Dorsolateral prefrontal cortex (tissue), 120 donors: ENCODE measurements at regions of chr15 and their contacts with region 1.

Region 1: GRCh38 chr15:55196458-55197361 is at the start of gene RSL24D1:
- DNase-seq: peak; percentile 89 to 99 (median 97)
- H3K4me3 ChIP-seq: peak within 1 kb of the TSS; percentile 63 to 99 (median 90)
- H3K27ac ChIP-seq: peak within 1 kb of the TSS in 58 of 59 donors; percentile 63 to 95 (median 88)
- H3K27me3 ChIP-seq: no peaks in the 10 kb centered on the region
- CTCF ChIP-seq: peak in 55 of 56 donors; percentile 28 to 74 (median 59)
- total RNA-seq, gene RSL24D1: 22.1 to 77.6 (median 52.2) TPM

Region 2: DNA sequence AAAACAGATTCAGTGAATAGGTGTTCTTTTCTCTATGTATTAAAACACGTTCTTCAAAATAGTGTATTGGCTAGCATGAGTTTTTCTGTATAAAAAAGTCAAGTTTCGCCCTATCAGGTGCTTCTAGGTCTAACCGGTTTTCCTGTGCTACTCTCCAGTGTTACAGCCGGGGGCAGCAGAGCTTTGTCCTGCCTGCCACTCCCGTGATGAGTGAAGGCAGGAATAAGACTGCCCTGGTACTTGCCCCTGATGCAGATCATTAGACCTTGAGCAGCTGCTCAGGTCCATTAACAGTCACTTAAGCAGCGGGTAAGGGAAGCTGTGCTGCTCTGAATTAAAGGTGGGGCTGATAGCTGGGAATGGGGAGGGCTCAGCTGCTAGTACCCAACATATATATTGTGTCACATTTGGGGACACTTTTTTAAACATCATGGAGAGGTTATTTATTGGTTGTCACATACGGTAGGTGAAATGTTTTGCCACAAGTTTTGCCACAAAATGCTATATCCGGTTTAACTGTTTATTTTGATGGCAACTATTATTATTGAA is 1219.8 kb before region 1 on chr15:
- intact Hi-C with region 1: loop called in 1 of 2 experiments (anchors 5 kb)
- DNase-seq: peak in 7 of 10 donors; percentile 7 to 80 (median 42)
- H3K4me3 ChIP-seq: peak overlapping the region in 1 of 59 donors; percentile 64
- H3K27ac ChIP-seq: peak overlapping the region in 31 of 59 donors; percentile 12 to 83 (median 57)
- H3K27me3 ChIP-seq: peaks cover 0 to 36% (median 0%) of the 10 kb centered on the region in 45 donors
- CTCF ChIP-seq: peak in 31 of 56 donors; percentile 1 to 53 (median 26)

Region 3: DNA sequence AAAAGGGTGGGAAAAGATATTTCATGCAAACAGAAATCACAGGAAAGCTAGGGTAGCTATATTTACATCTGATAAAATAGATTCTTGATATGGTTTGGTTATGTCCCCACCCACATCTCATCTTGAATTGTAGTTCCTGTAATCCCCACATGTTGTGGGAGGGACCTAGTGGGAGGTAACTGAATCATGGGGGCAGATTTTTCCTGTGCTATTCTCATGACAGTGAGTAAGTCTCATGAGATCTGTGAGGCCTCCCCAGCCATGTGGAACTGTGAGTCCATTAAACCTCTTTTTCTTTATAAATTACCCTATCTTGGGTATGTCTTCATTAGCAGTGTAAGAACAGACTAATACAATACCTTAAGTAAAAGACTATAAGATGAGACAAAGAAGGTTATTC is 558.0 kb before region 1 on chr15:
- intact Hi-C with region 1: no loop called
- DNase-seq: no peak
- H3K4me3 ChIP-seq: no peak overlapping the region
- H3K27ac ChIP-seq: no peak overlapping the region
- H3K27me3 ChIP-seq: no peaks in the 10 kb centered on the region
- CTCF ChIP-seq: no peak

Region 4: GRCh38 chr15:55407949-55408791 is 211.5 kb after region 1 on chr15 and contains the starts of genes CCPG1 and PIERCE2:
- intact Hi-C with region 1: loop called in 1 of 2 experiments (anchors 5 kb)
- DNase-seq: peak; percentile 72 to 94 (median 90)
- H3K4me3 ChIP-seq: peak within 1 kb of the TSS; percentile 64 to 99 (median 87)
- H3K27ac ChIP-seq: peak within 1 kb of the TSS; percentile 1 to 97 (median 91)
- H3K27me3 ChIP-seq: no peaks in the 10 kb centered on the region
- CTCF ChIP-seq: peak; percentile 60 to 95 (median 80)
- total RNA-seq, gene CCPG1: 69.0 to 139 (median 106) TPM
- total RNA-seq, gene PIERCE2: 0.82 to 9.2 (median 3.5) TPM in 118 of 120 experiments, not detected in the others

Region 5: DNA sequence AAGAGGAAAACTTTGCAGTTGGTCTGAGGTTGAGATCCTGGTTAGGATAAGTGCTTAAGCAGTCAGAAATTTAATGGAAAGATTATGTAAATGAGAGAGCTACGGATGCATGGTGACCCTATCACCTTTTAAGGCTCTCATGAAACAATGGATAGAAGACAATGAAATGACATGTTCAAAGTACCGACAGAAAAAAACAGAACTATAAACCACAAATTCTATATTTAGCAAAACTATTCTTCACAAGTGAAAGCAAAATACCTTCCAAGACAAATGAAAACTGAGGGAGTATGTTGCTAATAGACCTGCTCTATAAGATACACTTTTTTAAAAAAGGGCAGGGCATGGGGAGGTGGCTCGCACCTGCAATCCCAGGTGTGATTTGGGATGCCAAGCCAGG is 279.1 kb after region 1 on chr15:
- intact Hi-C with region 1: no loop called
- DNase-seq: no peak
- H3K4me3 ChIP-seq: no peak overlapping the region
- H3K27ac ChIP-seq: no peak overlapping the region
- H3K27me3 ChIP-seq: no peaks in the 10 kb centered on the region
- CTCF ChIP-seq: no peak